ENCODE measurements at regions of chr11 and their contacts with region 1.

Region 1: DNA sequence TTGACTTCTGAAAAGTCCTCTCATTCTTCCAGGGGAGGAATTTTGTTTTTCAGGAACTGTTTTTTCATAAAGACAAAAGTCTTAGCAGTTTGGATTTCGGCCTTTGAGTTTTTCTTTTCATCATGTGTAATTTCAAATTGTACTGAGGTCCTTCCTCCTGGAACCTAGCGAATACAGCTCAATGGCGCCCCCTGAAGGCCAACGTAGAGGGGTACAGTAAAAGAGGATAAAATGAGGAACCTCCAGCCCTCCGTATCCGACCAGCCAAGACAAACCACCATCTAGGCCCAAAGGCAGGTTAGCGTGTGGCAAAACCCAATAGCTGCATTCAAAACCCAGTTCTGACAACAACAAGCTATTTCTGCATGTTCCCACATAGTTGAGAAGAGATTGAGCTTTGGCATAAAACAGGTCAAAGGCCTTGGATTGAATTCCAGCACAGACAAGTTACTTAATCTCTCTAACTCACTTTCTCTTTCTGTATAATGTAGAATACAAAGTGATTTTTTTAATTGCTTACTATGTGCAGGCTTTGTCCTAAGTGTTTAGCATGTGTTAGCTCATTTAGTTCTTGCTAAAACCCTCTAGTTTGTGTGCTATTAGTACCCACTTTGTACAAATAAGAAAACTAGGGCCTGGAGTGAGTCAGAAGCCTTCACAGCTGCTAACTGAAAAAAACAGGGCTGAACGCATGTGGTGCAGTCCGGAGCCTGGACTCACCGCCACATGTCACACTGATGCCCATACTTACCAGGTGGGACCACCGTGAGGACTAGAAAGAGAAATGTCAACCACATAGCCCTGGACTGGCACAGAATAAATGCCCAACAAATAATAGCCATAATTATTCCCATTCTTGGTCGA is 43.2 kb upstream of the ETS1 start:
- DNase-seq: peak; percentile 94 to 98 (median 96)
- H3K4me3 ChIP-seq: peak overlapping the region in 1 of 7 experiments; percentile 43
- H3K27ac ChIP-seq: no peak overlapping the region
- H3K4me1 ChIP-seq: peaks cover 5 to 27% (median 12%) of the 10 kb centered on the region in 4 experiments
- H3K27me3 ChIP-seq: no peaks in the 10 kb centered on the region

Region 2: GRCh38 chr11:128157423-128158298 is 472.9 kb before region 1 on chr11:
- CTCF ChIA-PET with region 1: interaction called, 34 read pairs
- POLR2A ChIA-PET with region 1: no interaction called
- DNase-seq: peak; percentile 79 to 89 (median 85)
- H3K4me3 ChIP-seq: peak overlapping the region in 6 of 7 experiments; percentile 31 to 69 (median 50)
- H3K27ac ChIP-seq: no peak overlapping the region
- H3K4me1 ChIP-seq: no peaks in the 10 kb centered on the region
- H3K27me3 ChIP-seq: peaks cover 0 to 2% (median 0%) of the 10 kb centered on the region in 5 experiments

Region 3: DNA sequence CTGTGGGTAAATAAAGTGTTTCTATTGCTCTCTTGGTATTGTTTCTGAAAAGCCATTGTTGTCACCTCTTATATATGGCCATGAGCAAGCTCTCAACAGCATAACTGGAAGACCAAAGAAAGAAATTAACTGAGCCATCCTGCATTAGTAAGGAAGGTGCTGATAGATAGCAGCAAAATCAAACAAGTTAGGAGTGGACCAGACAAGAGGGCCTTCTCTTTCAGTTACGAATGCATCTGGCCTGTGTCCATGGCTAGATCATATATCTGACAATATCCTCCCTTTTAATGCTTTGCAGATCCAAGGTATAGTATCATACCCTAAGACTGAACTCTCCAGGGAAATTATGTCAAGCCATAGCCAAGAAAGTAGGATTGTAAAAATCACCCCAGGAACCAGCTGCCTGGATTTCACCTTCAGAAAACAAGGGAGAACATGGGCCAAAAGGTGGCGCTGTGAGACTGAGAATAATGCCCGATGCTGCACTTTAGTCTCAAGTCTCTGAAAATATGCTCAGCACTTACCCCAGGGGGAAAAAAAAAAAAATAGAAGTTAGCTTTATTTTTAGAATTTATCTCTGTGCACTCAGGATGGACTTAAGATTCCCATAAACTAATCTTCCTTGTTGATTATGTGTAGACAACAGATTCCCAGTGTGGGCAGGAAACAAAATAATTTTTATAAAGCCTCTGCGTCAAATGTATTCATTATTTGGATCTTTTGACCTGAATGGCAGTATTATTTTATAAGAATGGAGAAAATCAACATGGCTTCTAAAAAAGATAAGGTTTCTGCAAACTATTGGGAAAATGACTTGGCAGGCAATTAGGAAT is 458.3 kb before region 1 on chr11:
- CTCF ChIA-PET with region 1: interaction called, 22 read pairs
- POLR2A ChIA-PET with region 1: no interaction called
- DNase-seq: peak; percentile 83 to 92 (median 88)
- H3K4me3 ChIP-seq: no peak overlapping the region
- H3K27ac ChIP-seq: no peak overlapping the region
- H3K4me1 ChIP-seq: no peaks in the 10 kb centered on the region
- H3K27me3 ChIP-seq: no peaks in the 10 kb centered on the region

Region 4: GRCh38 chr11:128290106-128290840 is 340.3 kb before region 1 on chr11:
- CTCF ChIA-PET with region 1: interaction called, 158 read pairs
- POLR2A ChIA-PET with region 1: interaction called, 4 read pairs
- DNase-seq: peak; percentile 84 to 90 (median 87)
- H3K4me3 ChIP-seq: peak overlapping the region in 1 of 7 experiments; percentile 41
- H3K27ac ChIP-seq: peak overlapping the region in 1 of 2 experiments; percentile 7
- H3K4me1 ChIP-seq: peaks cover 14 to 35% (median 24%) of the 10 kb centered on the region in 4 experiments
- H3K27me3 ChIP-seq: no peaks in the 10 kb centered on the region

Region 5: DNA sequence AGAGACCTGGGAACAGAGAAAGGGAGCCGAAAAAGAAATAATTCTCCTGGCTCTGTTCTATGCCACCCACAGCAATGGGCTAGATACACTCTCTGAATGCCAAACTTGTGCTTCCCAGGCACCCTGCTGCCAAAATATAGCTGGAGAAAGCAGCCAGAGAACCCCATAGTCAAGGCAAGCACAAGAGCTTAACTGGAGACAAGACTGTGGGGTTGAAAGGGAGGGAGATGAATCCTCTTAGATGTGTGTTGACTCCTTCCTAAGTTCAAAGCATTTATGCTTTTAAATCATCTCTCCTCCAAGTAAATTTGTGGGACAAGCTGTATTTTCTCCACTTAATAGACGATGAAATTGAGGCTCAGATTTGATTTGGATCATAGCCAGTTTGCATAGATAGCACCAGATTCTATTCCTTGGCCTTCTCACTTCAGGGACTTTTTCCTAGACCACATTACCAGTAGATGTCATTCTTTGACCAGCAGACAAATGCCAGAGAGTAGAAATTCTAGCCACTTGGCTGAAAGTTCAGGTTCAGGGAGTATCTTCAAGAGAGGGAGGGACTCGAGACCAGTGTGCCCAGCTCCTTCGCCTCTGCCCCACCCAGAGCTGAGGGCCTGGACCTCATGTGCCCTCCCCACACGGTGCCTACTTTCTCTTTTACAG is 26.7 kb before region 1 on chr11:
- CTCF ChIA-PET with region 1: interaction called, 23 read pairs
- POLR2A ChIA-PET with region 1: interaction called, 3 read pairs
- DNase-seq: no peak
- H3K4me3 ChIP-seq: no peak overlapping the region
- H3K27ac ChIP-seq: no peak overlapping the region
- H3K4me1 ChIP-seq: no peaks in the 10 kb centered on the region
- H3K27me3 ChIP-seq: no peaks in the 10 kb centered on the region

Region 6: GRCh38 chr11:128643661-128644317 is 13.2 kb after region 1 on chr11:
- CTCF ChIA-PET with region 1: interaction called, 13 read pairs
- POLR2A ChIA-PET with region 1: interaction called, 4 read pairs
- DNase-seq: no peak
- H3K4me3 ChIP-seq: no peak overlapping the region
- H3K27ac ChIP-seq: no peak overlapping the region
- H3K4me1 ChIP-seq: peaks cover 11 to 18% (median 12%) of the 10 kb centered on the region in 4 experiments
- H3K27me3 ChIP-seq: no peaks in the 10 kb centered on the region

Region 7: DNA sequence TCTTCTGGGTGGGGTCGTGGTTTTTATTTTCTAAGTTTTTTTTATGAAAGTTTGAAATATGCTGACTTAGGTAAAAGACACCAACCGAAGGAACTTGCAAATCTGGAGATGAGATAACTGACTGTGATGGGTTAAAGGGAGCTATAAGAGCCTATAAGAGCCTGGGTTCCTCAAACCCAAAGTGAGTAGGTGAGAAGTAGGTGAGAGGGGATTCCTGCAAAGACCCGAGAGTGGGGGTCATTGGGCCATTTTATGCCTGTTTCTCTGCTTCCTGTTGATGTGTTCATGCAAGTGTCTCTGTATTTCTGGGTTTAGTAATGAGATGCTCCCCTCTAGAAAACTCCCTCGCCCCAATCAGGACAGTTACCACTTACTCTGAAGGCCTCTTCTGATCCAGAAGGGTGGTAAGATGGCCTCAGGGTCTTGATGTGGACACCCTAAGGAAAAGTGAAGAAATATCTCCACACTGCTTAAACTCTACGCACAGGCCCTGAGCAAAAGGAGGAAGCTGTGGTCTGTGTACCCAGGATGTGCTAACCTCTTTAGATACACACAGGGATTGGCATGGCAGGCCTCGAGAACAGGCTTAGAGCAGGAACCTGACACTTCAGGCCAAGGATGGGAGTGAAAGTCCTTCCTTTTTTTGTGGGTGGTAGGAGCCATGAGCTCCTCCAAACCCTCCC is 65.1 kb after region 1 on chr11:
- CTCF ChIA-PET with region 1: interaction called, 13 read pairs
- POLR2A ChIA-PET with region 1: interaction called, 3 read pairs
- DNase-seq: peak; percentile 86 to 95 (median 92)
- H3K4me3 ChIP-seq: peak overlapping the region; percentile 86 to 96 (median 91)
- H3K27ac ChIP-seq: peak overlapping the region; percentile 70 to 83
- H3K4me1 ChIP-seq: peaks cover 28 to 82% (median 76%) of the 10 kb centered on the region in 4 experiments
- H3K27me3 ChIP-seq: no peaks in the 10 kb centered on the region

Region 8: DNA sequence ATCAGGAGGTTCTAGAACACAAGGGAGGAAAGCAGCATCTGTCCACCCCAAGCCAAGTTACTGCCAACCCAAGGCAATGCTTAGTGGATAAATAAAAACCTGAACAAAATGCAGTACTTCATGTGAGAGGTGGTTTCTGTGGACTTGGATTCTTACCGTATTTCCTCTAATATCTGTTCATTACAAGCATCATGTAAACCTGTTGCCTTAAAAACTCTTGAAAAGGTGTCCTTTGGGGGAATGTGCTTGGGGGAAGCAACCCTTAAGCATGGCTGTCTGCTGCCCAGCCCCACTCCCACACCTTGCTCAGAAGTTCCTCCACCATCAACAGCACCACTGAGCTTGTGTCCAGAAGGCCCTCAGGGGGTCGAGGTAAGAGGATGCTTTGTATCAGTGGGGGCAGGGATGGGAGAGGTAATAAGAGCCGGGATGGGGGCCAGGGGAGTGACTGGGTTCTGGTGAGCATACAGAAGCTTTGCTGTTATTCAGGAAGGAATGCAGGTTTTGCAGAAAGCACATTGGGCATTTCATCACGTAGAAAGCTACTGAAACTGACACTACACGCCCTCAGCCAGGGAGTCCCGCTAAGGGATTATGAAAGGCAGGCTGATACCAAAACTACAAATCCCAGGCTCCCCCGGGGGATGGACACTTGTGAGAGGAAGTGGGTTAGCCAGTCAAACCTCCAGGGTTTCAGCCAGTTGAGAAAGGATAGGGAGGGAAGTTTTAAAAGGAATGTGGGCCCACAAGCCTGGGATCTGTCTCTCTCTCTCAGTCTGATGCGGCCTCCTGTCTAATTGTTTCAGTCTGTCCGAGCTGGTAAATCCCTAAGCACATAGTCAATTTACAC is 184.5 kb after region 1 on chr11:
- CTCF ChIA-PET with region 1: no interaction called
- POLR2A ChIA-PET with region 1: no interaction called
- DNase-seq: peak in 1 of 3 donors; percentile 28
- H3K4me3 ChIP-seq: no peak overlapping the region
- H3K27ac ChIP-seq: no peak overlapping the region
- H3K4me1 ChIP-seq: no peaks in the 10 kb centered on the region
- H3K27me3 ChIP-seq: no peaks in the 10 kb centered on the region

Measured in common myeloid progenitor, CD34-positive (primary cell).